A549 (cell line): ENCODE measurements at regions of chr1 and their contacts with region 1.

Region 1: GRCh38 chr1:43763497-43763973 is 56.2 kb downstream of the ST3GAL3 start:
- DNase-seq: peak; percentile 41 to 79
- ATAC-seq: peak; percentile 99
- H3K4me3 ChIP-seq: no peak overlapping the region
- H3K27ac ChIP-seq: peak overlapping the region; percentile 52 to 65; a peak in 4 of 6 replicates
- H3K4me1 ChIP-seq: peaks cover 10% of the 10 kb centered on the region; the same call in 1 of the 3 replicates
- CTCF ChIP-seq: peak; percentile 83
- EP300 ChIP-seq: no peak
- POLR2A ChIP-seq: no peak
- RAD21 ChIP-seq: peak; percentile 92 to 96

Region 2: DNA sequence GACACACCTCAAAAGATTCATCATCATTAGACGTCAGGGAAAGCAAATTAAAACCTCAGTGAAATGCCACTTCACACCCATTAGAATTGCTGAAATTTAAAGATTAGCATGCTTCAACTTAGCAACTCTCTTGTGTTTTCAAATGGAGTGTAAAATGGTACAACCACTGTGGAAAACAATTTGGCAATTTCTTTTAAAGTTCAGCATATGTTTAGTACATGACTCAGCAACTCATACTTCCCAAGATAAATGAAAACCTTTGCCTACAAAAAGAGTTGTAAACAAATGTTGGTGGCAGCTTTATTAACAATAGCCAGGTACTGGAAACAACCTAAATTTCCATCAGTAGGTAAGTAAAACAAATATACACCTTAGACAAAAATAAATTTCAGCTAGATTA is 13.5 kb before region 1 on chr1:
- CTCF ChIA-PET with region 1: interaction called, 15 read pairs
- POLR2A ChIA-PET with region 1: no interaction called
- DNase-seq: no peak
- ATAC-seq: no peak
- H3K4me3 ChIP-seq: no peak overlapping the region
- H3K27ac ChIP-seq: peak overlapping the region in 1 of 2 experiments; percentile 26; a peak in 1 of 6 replicates
- H3K4me1 ChIP-seq: no peaks in the 10 kb centered on the region
- CTCF ChIP-seq: no peak
- EP300 ChIP-seq: no peak
- POLR2A ChIP-seq: no peak
- RAD21 ChIP-seq: no peak

Region 3: DNA sequence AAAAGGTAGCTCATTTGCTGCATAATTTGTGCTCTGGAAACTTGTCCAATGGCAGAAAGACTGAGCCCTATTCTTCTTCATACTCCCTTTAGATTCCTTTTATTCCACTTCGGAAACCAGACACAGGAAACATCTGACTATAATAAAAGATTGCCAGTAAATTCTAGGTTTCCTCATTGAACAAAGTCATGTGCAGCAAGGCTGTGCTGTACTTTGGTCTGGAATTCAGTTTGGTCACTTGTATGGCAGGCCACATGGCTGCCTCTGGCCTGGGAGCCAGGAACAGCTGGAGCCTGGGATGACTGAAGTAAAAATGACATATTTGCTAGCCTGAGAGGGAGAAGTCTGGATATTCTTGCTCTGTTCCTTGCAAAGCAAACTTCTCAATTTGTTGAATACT is 23.4 kb after region 1 on chr1:
- CTCF ChIA-PET with region 1: interaction called, 10 read pairs
- POLR2A ChIA-PET with region 1: no interaction called
- DNase-seq: no peak
- ATAC-seq: no peak
- H3K4me3 ChIP-seq: no peak overlapping the region
- H3K27ac ChIP-seq: peak overlapping the region in 1 of 2 experiments; percentile 78; a peak in 1 of 6 replicates
- H3K4me1 ChIP-seq: peaks cover 34% of the 10 kb centered on the region
- CTCF ChIP-seq: no peak
- EP300 ChIP-seq: no peak
- POLR2A ChIP-seq: no peak
- RAD21 ChIP-seq: no peak

Region 4: GRCh38 chr1:43934101-43934985 is 170.8 kb after region 1 on chr1:
- CTCF ChIA-PET with region 1: interaction called, 243 read pairs
- POLR2A ChIA-PET with region 1: no interaction called
- DNase-seq: peak; percentile 51 to 60
- ATAC-seq: peak; percentile 32 to 76; a peak in 4 of 6 replicates
- H3K4me3 ChIP-seq: no peak overlapping the region
- H3K27ac ChIP-seq: peak overlapping the region in 1 of 2 experiments; percentile 92; a peak in 4 of 6 replicates
- H3K4me1 ChIP-seq: peaks cover 54% of the 10 kb centered on the region
- CTCF ChIP-seq: peak; percentile 63
- EP300 ChIP-seq: no peak
- POLR2A ChIP-seq: no peak
- RAD21 ChIP-seq: peak; percentile 74 to 81

Region 5: GRCh38 chr1:43974443-43975248 is 211.1 kb after region 1 on chr1 and contains the start of gene ATP6V0B:
- CTCF ChIA-PET with region 1: interaction called, 15 read pairs
- POLR2A ChIA-PET with region 1: no interaction called
- DNase-seq: peak; percentile 87 to 91
- ATAC-seq: peak; percentile 73 to 85
- H3K4me3 ChIP-seq: peak within 1 kb of the TSS; percentile 95
- H3K27ac ChIP-seq: peak within 1 kb of the TSS; percentile 94 to 95
- H3K4me1 ChIP-seq: peaks cover 35% of the 10 kb centered on the region; the same call in 2 of the 3 replicates
- CTCF ChIP-seq: no peak
- EP300 ChIP-seq: no peak
- POLR2A ChIP-seq: peak; percentile 56
- RAD21 ChIP-seq: no peak
- polyA plus RNA-seq, gene ATP6V0B: 97.0 and 104 TPM in 2 replicates

Region 6: GRCh38 chr1:44036409-44037139 is 273.0 kb after region 1 on chr1:
- CTCF ChIA-PET with region 1: interaction called, 15 read pairs
- POLR2A ChIA-PET with region 1: no interaction called
- DNase-seq: peak; percentile 48 to 67
- ATAC-seq: peak; percentile 85 to 89
- H3K4me3 ChIP-seq: no peak overlapping the region
- H3K27ac ChIP-seq: peak overlapping the region; percentile 63 to 77
- H3K4me1 ChIP-seq: peaks cover 30% of the 10 kb centered on the region
- CTCF ChIP-seq: peak; percentile 72
- EP300 ChIP-seq: no peak
- POLR2A ChIP-seq: no peak
- RAD21 ChIP-seq: peak; percentile 77 to 79